ENCODE measurements at regions of chr13 and their contacts with region 1.

Region 1: DNA sequence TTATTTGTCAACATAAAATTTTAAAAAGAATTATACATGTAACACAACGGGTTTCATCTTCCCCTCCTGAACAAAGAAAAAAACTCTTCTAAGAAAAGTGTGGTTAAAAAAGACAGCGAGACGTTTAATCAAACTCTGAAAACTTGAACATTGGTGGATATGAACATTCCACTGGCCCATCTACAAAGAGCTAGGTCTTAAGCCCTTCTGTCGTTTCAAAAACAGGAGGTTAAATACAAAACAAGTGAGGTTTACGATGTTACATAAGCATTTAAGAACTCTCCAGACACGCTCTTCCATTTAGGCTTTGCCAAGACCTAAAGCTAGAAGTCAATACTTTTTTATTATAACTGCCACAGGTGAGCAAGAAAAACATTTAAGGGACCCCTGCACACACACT is 9.4 kb upstream of the DOCK9 start:
- DNase-seq: no peak
- ATAC-seq: no peak
- H3K4me3 ChIP-seq: no peak overlapping the region
- H3K27ac ChIP-seq: no peak overlapping the region
- H3K4me1 ChIP-seq: peaks cover 0 to 40% (median 6%) of the 10 kb centered on the region in 9 donors
- H3K27me3 ChIP-seq: peaks cover 0 to 4% (median 0%) of the 10 kb centered on the region in 7 donors
- CTCF ChIP-seq: no peak

Region 2: DNA sequence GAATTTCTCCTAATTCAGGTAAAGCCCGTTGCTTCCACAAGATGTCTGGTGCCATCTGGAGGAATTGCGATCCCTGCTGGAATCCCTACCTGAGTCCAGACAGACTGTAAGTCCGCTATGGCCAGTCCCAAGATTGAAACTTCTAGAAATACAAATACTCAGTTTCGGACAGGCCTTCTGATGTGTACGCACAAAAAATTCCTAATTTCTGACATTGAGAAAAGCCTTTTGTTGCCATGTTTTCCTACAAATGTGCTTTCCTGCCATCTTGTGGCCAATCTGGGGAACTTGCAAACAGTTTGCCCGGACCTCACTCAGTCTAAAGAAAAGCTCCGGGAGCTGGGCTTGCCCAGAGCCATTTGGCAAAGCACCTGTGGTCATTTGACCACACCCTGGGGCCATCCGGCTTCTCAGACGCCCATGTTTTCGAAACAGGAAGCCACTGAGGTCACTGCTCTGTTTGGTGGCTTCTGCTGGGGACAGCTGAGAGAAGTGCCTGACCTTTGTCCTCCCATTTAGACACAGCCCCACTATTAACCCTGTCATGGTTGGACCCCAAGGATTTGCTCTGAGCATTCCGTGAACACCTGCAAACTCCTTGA is 314.2 kb before region 1 on chr13:
- intact Hi-C with region 1: no loop called
- DNase-seq: peak; percentile 45 to 72
- ATAC-seq: peak; percentile 89 to 96 (median 92)
- H3K4me3 ChIP-seq: peak overlapping the region in 1 of 10 donors; percentile 9
- H3K27ac ChIP-seq: peak overlapping the region in 2 of 10 donors; percentile 20 to 29
- H3K4me1 ChIP-seq: peaks cover 0 to 18% (median 11%) of the 10 kb centered on the region in 9 donors
- H3K27me3 ChIP-seq: no peaks in the 10 kb centered on the region
- CTCF ChIP-seq: peak; percentile 75 to 95 (median 88)

Region 3: GRCh38 chr13:98967491-98967890 is 19.8 kb before region 1 on chr13:
- intact Hi-C with region 1: loop called in 1 of 10 experiments (anchors 1 kb)
- DNase-seq: no peak
- ATAC-seq: no peak
- H3K4me3 ChIP-seq: no peak overlapping the region
- H3K27ac ChIP-seq: peak overlapping the region in 1 of 10 donors; percentile 20
- H3K4me1 ChIP-seq: peaks cover 43 to 100% (median 79%) of the 10 kb centered on the region in 9 donors
- H3K27me3 ChIP-seq: no peaks in the 10 kb centered on the region
- CTCF ChIP-seq: no peak

Measured in heart right ventricle (tissue), 16 donors.